H1 (cell line): ENCODE measurements at regions of chr19 and their contacts with region 1.

Region 1: DNA sequence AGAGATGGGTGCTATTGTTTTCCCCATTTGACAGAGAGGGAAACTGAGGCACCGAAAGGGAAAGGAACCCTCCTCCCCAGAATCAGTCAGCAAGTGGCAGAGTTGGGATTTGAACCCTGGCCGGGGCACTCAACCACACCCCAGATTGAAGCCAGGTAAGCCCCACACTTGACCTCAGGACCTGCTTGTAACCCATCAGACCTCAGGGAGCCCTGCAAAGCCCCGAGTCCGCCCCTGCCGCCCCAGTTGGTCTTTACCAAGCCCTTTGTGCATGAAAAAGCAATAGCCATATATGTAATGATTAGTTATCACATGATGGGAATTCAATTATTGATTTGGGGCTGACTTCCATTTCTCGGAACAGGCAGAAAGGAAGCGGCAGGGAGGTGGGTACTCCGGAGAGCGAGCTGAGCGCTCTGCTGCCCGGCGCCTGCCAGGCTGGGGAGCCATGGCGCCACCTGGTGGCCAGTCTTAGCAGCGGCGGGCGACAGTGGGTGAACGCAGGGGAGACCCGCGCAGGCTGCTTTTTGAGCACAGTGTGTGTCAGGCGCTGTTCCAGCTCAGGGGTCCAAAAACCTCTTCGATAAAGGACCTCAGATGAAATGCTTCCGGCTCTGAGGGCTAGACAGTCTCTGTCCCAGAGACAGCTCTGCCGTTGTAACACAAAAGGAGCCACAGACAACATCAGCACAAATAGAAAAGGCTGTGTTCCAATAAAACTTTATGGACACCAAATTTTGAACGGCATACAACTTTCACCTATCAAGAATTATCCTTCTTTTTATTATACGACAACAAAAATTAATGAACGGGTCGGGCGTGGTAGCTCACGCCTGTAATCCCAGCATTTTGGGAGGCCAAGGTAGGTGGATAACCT is 82.9 kb upstream of the CACNA1A start:
- DNase-seq: peak; percentile 36 to 97
- H3K4me3 ChIP-seq: no peak overlapping the region
- H3K27ac ChIP-seq: no peak overlapping the region
- H3K4me1 ChIP-seq: no peaks in the 10 kb centered on the region
- H3K27me3 ChIP-seq: no peaks in the 10 kb centered on the region
- CTCF ChIP-seq: peak; percentile 90 to 95 (median 94)
- EP300 ChIP-seq: no peak
- POLR2A ChIP-seq: no peak
- RAD21 ChIP-seq: peak; percentile 88 to 93

Region 2: GRCh38 chr19:13492128-13492527 is 97.1 kb before region 1 on chr19:
- CTCF ChIA-PET with region 1: no interaction called
- POLR2A ChIA-PET with region 1: no interaction called
- DNase-seq: no peak
- H3K4me3 ChIP-seq: no peak overlapping the region
- H3K27ac ChIP-seq: no peak overlapping the region
- H3K4me1 ChIP-seq: peaks cover 0 to 9% (median 0%) of the 10 kb centered on the region in 4 experiments; a peak in 1 of 7 replicates
- H3K27me3 ChIP-seq: no peaks in the 10 kb centered on the region
- CTCF ChIP-seq: no peak
- EP300 ChIP-seq: no peak
- POLR2A ChIP-seq: no peak
- RAD21 ChIP-seq: no peak

Region 3: GRCh38 chr19:13604902-13605586 is 15.8 kb after region 1 on chr19:
- CTCF ChIA-PET with region 1: interaction called, 15 read pairs
- POLR2A ChIA-PET with region 1: no interaction called
- DNase-seq: no peak
- H3K4me3 ChIP-seq: no peak overlapping the region
- H3K27ac ChIP-seq: no peak overlapping the region
- H3K4me1 ChIP-seq: peaks cover 0 to 3% (median 3%) of the 10 kb centered on the region in 4 experiments; a peak in 5 of 7 replicates
- H3K27me3 ChIP-seq: no peaks in the 10 kb centered on the region
- CTCF ChIP-seq: no peak
- EP300 ChIP-seq: no peak
- POLR2A ChIP-seq: no peak
- RAD21 ChIP-seq: no peak